ENCODE measurements at regions of chr13 and their contacts with region 1.

Region 1: DNA sequence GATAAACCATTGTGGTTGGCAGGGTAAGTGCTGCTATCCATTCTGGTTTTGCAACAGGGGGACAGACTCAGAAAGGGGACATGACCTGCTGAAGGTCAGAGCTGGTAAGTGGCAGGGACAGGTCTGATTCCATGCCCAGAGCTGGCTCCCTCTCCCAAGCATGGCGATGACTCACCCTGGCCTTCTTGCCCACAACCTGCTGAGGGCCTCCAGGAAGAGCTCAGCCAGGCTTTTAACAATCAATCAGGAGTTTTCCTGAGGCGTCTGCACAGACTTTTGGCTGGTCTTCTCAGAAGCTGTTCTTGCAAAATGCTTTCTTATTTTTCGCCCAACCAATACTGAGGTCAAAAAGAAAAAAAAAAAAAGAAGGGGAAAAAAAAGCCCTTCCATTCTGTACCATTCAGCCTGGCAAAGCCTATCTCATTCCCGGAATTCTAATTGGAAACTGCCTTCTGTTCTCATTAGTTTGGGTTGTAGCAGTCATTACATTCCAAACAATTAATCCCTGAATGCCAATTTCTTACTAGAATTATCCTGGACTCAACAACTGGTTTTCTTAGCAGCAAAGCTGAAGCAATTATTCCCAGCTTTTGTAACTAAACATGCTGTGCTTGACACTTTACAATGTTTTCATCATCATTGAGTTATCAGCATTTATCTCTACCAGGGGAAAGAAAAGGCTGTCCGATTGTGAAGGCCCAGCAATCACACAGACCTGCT is 17.7 kb downstream of the SIAH3 start:
- DNase-seq: peak; percentile 71 to 85
- ATAC-seq: peak; percentile 99 to 100 (median 100)
- H3K4me3 ChIP-seq: no peak overlapping the region
- H3K27ac ChIP-seq: peak overlapping the region; percentile 32
- H3K4me1 ChIP-seq: peaks cover 11% of the 10 kb centered on the region
- H3K27me3 ChIP-seq: no peaks in the 10 kb centered on the region
- CTCF ChIP-seq: no peak

Region 2: GRCh38 chr13:45879670-45880069 is 45.9 kb after region 1 on chr13:
- intact Hi-C with region 1: loop called in 1 of 2 experiments (anchors 5 kb)
- DNase-seq: peak; percentile 70 to 90
- ATAC-seq: peak; percentile 100
- H3K4me3 ChIP-seq: no peak overlapping the region
- H3K27ac ChIP-seq: peak overlapping the region; percentile 54
- H3K4me1 ChIP-seq: peaks cover 9% of the 10 kb centered on the region
- H3K27me3 ChIP-seq: peaks cover 0 to 2% (median 0%) of the 10 kb centered on the region in 3 donors
- CTCF ChIP-seq: peak; percentile 54

Measured in psoas muscle (tissue), 8 donors.